Posterior vena cava (tissue), 2 donors: ENCODE measurements at regions of chr9 and their contacts with region 1.

Region 1: GRCh38 chr9:32968101-32969011 is 33.1 kb downstream of the APTX start:
- DNase-seq: no peak

Region 2: GRCh38 chr9:32384364-32385151 is 583.8 kb before region 1 on chr9 and contains the start of gene ACO1:
- intact Hi-C with region 1: loop called in 1 of 2 experiments (anchors 5 kb)
- DNase-seq: peak; percentile 96
- total RNA-seq, gene ACO1: 32.7 to 35.7 TPM

Region 3: DNA sequence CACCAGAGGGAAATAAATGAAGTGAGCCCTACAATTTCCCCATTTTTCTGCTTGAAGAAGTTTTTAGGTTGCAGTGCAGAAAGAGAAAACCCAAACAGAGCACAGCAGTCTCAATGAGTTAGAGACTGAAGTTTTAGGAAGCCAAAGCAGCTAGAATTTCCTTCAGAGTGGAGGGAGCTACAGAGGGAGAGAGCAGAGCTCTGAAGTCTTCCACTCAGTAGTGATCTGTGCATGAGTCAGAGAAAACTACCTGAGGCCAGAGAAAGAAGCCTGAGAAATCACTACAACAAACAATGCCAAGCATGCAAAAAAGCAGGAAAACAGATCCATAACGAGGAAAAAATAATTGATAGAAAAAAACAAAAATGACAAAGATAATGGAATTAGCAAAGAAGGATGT is 377.5 kb before region 1 on chr9:
- intact Hi-C with region 1: loop called in 1 of 2 experiments (anchors 10 kb)
- DNase-seq: no peak

Region 4: GRCh38 chr9:33012328-33013069 is 44.1 kb after region 1 on chr9:
- intact Hi-C with region 1: no loop called
- DNase-seq: no peak

Region 5: DNA sequence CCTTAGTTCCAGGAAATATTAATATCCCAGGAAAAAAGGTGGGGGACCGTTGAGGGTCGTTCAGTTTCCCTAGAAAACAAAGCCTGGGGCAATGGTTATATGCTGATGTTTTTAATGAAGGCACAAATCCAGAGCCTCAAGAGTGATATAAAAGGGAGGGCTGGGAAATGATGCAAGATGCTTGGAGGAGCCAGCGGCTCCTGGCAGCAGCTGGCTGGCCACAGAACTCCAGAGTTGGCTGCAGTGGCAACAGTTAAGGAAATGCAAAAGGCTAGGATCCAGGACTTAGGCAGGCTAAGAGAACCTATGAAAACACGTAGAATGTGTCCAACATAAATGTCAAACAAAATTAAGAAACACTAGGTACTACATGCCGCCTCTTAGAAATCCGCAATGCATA is 229.8 kb after region 1 on chr9:
- intact Hi-C with region 1: no loop called
- DNase-seq: peak; percentile 91